Colonic mucosa (tissue), 4 donors: ENCODE measurements at regions of chr1 and their contacts with region 1.

Region 1: DNA sequence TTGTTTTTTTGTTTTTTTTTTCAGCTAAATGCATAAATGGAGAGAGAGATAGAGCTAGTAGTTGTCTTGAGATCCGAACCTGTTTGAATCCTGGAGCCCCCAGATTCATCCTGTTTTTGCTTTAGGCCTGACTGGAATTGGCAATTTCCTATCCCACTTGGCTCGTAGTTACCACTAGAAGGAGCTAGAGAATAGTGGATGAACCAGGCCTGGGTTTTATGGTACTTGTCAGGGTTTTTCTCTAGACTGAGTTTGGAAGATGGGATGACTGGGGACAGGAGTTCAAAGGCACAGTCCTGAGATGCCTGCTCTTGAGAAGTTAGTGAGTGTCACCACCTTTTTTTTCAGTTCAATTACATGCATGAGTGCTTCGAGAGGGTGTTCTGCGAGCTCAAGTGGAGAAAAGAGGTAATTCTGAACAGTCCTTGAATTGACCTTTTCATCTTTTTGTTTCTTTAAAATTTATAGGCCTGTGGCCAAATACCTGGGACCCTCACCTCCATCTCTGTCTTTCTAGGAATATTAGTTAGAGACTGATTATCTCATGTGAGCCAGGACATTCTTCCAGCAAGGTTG is 23.4 kb downstream of the CELF3 start:
- DNase-seq: peak; percentile 20
- H3K4me3 ChIP-seq: no peak overlapping the region
- H3K27ac ChIP-seq: no peak overlapping the region
- H3K4me1 ChIP-seq: no peaks in the 10 kb centered on the region
- H3K27me3 ChIP-seq: no peaks in the 10 kb centered on the region
- CTCF ChIP-seq: peak; percentile 52

Region 2: DNA sequence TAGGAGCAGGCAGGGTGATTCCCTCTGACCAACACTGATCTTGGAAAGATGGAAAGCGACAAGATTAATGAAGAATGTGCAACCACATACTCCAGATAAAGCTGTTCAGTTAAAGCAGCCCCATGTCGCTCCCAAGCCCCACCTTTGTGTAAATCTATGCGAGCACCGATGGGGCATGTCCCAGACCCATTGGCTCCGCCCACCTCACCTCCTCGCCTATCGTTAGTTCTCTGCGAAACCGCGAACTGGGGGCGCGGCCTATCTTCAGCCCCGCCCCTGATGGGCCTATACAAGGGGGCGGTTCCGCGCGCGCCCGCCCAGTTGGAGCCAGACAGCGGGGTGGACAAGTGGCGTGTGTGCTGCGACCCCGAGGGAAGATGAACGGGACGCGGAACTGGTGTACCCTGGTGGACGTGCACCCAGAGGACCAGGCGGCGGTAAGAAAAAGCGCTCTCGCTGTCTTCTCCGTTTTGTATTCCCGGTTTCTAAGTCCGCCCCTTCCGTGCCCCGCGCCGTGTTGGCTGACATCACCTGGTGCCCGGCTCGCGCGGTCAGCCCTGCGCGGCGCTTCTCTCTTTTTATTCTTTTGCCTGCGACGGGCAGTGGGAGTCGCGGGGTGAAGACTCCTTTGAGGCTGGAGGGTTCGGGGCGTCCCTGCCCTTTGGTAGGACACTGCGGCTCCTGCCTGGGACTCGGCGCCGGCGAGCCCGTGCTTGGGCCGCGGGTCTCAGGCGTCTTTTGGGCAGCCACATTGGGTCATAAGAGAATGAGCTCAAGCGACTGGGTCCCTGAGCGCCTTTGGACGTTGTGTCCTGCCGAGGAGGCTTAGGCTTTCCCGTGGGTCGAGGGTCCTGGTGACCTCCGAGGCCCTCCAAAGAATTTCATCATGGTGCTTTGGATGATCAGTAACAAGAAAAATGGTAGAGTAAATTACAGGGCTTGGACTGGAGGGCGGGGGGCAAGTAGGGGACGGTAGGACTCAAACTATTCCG is 152.9 kb before region 1 on chr1 and contains the start of gene TUFT1:
- intact Hi-C with region 1: loop called (anchors 10 kb)
- DNase-seq: peak; percentile 96
- H3K4me3 ChIP-seq: peak within 1 kb of the TSS; percentile 69
- H3K27ac ChIP-seq: peak within 1 kb of the TSS; percentile 95
- H3K4me1 ChIP-seq: no peaks in the 10 kb centered on the region
- H3K27me3 ChIP-seq: no peaks in the 10 kb centered on the region
- CTCF ChIP-seq: no peak
- total RNA-seq, gene TUFT1: 25.5 to 40.6 TPM

Region 3: DNA sequence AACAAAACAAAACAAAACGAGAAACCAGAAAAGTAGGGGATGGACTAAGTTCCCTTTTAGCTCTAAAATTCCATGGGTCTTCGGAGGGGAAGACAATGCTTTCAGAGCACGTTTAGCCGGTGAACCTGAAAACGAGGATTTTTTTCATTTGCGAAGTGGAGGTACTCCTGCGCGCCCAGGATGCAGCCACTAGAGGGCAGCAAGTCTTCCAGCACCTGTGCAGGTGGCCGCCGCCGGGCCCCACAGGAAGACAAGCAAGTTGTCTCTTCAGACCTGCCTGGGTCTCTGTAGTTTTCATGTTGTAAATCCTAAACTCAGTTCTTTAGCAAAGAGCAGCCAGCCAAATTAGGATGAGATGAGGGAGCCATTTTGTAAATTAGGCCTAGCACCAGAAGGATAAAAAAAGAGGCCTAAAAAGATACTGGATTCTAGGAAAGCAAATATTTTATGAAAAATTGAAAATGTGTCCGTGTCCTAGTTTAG is 99.0 kb before region 1 on chr1:
- intact Hi-C with region 1: loop called (anchors 10 kb)
- DNase-seq: peak; percentile 87
- H3K4me3 ChIP-seq: no peak overlapping the region
- H3K27ac ChIP-seq: no peak overlapping the region
- H3K4me1 ChIP-seq: no peaks in the 10 kb centered on the region
- H3K27me3 ChIP-seq: no peaks in the 10 kb centered on the region
- CTCF ChIP-seq: peak; percentile 92

Region 4: DNA sequence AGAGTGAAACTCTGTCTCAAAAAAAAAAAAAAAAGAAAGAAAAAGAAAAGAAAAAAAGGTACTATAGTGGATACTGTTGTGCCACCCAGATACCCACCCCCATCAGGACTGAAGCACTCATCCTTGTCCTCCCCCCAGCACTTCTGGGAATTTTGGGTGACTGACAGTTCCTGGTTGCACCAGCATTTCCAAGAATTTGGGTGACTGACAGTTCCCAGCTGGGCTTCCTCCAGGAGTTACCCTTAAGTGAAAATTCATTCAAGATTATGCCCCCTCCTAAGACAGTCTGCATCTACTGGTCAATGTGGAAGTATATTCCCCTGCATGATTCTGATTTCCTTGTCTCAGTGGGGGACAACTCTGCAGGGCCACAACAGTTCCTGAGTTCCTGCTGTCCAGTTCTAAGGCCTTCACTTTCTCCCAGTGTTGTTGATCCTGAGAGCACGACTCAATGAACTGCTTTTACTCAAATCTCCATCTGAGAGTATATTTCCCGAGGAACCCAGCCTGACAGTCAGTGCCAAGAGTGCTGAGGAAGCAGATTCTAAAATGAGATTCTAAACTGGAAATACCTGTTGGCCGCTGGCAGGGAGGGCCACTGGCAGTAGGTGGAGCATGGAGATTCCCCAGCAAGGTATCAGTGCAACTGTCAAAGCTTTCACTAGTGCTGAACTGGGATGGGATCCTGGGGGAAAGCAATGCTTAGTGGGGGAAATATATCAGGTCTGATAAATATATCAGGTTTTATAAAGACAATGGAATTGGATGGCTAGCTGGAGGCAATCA is 46.6 kb after region 1 on chr1:
- intact Hi-C with region 1: loop called (anchors 2 kb)
- DNase-seq: no peak
- H3K4me3 ChIP-seq: no peak overlapping the region
- H3K27ac ChIP-seq: no peak overlapping the region
- H3K4me1 ChIP-seq: no peaks in the 10 kb centered on the region
- H3K27me3 ChIP-seq: no peaks in the 10 kb centered on the region
- CTCF ChIP-seq: no peak

Region 5: DNA sequence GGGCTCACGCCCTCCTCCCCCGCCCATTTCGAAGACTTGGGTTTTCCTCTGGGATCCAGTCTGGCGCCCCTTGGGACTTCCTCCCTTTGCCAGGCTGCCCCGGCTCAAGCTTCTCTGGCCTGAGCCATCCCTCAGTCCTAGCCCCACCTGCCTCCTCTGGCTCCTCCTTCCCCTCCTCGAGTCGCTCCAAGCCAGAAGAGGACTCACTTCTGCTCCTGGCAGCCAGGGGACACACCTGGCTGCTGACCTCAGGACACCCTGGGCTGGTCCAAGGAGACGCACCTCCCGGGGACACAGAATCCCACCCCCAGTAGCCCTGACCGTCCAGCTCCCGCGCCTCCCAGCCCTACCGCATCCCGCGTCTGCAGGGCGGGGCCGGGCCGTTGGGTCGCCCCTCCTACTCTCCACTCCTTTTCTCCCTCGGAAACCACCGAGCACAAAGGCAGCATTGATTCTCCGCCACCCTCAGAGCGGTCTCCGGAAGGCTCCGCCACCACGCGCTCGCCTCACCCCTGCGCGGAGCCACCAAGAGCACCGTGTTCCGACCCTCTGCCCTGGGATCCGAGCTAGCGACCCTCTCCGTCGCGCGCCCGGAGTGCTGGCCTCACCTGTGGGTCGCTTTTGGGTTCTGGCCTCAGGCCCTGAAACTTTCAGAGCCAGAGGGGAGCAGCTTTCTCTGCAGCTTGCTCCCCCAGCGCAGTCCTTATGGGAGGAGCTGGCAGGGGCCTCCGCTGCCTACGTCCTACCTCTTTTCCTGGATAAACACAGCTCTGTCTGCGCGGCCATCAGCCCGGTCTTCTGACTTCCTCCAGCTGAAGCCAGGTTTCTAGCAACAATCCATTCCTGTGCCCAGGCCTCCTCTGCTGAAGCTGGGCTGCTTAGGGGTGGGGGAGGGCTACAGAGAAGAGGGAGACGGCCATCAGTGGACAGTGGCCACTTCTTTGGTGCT is 146.6 kb after region 1 on chr1 and contains the start of gene C2CD4D:
- intact Hi-C with region 1: loop called (anchors 10 kb)
- DNase-seq: peak; percentile 83
- H3K4me3 ChIP-seq: peak within 1 kb of the TSS; percentile 35
- H3K27ac ChIP-seq: peak within 1 kb of the TSS; percentile 90
- H3K4me1 ChIP-seq: no peaks in the 10 kb centered on the region
- H3K27me3 ChIP-seq: peaks cover 6% of the 10 kb centered on the region
- CTCF ChIP-seq: no peak
- total RNA-seq, gene C2CD4D: 0.85 to 1.6 TPM